ENCODE measurements at regions of chr5 and their contacts with region 1.

Region 1: DNA sequence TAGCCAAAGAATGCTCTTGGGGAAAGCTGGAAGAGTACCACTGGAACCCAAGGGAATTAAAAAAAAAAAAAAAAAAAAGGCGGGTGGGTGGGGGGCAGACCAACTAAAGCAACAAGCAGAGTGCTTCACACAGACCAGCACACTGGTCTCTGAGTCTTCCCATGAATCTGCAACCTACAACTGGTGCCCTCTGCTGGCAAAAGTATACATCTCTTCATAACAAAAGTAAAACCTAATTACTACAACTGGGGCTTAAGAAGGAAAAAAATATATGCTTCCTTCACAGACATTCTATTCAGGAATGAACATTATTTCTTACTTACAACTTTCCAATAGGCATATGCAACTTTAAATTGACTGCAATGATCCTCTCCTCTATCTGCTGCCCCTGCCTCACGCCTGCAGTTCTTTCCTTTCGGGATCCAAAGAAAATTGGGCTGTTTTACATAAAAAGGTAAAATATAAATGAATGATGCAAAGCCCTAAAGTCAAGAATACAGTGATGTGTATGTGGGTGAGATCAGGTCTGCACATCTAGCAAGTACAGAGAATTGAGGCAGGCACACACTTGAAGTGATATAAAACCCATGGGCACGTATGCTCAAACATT is 7.2 kb upstream of the KLHL3 start:
- DNase-seq: no peak

Region 2: GRCh38 chr5:137629646-137630045 is 113.5 kb before region 1 on chr5:
- intact Hi-C with region 1: loop called (anchors 1 kb)
- DNase-seq: no peak

Region 3: GRCh38 chr5:137660349-137660817 is 82.8 kb before region 1 on chr5:
- intact Hi-C with region 1: loop called (anchors 2 kb)
- DNase-seq: no peak

Region 4: GRCh38 chr5:137688210-137688840 is 54.8 kb before region 1 on chr5:
- intact Hi-C with region 1: no loop called
- DNase-seq: no peak